MCF 10A (cell line): ENCODE measurements at regions of chr2 and their contacts with region 1.

Region 1: DNA sequence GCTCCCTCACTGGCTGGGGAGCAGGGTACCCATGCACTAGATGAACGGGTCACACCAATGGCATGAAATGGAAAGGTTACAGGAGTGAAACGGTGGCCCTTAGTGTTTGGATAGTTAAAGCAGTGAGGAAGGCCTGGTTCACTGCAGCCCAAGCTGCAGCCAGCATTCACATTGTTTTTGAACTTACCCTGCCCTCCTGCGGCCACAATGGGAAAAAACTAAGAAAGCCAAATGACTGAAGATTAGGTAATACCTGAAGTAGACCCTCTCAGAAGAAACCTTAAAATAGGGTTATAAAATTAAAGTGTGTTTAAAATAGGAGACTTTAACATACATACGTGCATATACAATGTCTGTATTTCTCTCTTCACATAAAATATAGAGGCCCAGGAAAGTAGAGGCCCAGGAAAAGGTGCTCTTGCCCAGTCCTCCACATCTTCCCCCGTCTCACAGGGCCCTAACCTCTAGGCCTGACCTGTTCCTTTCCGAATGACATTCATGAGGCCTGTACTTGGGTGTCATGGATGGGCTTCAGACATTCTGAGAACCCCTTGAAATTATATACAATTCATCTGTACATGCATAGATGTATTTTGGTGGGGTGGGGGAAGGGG is 33.3 kb downstream of the DOK1 start:
- DNase-seq: peak; percentile 78
- H3K4me3 Mint-ChIP-seq: no peak overlapping the region
- H3K27ac Mint-ChIP-seq: no peak overlapping the region
- H3K4me1 Mint-ChIP-seq: peaks cover 8% of the 10 kb centered on the region
- H3K27me3 Mint-ChIP-seq: peaks cover 4% of the 10 kb centered on the region
- CTCF ChIP-seq: peak; percentile 71

Region 2: DNA sequence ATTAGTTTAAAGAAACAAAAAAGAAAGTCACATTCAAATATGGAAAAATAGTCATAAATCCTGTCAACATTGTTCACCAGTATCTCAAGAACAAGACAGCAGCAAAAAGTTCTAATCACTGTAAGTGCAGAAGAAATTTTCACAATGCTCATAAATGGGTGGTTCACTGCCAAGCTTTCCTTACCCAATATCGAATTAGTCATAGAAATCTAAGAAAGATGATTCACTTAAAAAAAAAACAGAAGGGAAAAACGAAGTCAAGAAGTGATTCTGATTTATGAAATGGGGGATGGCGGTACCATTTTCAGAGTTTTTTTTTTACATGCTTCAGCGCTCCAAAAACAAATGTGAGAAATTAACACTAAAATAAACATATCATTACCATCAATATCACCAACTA is 1918.7 kb before region 1 on chr2:
- CTCF ChIA-PET with region 1: no interaction called
- POLR2A ChIA-PET with region 1: no interaction called
- intact Hi-C with region 1: no loop called
- DNase-seq: peak; percentile 82
- H3K4me3 Mint-ChIP-seq: peak overlapping the region; percentile 3
- H3K27ac Mint-ChIP-seq: no peak overlapping the region
- H3K4me1 Mint-ChIP-seq: peaks cover 13% of the 10 kb centered on the region
- H3K27me3 Mint-ChIP-seq: no peaks in the 10 kb centered on the region
- CTCF ChIP-seq: no peak

Region 3: GRCh38 chr2:74250189-74250631 is 337.6 kb before region 1 on chr2:
- CTCF ChIA-PET with region 1: interaction called, 4 read pairs
- POLR2A ChIA-PET with region 1: no interaction called
- intact Hi-C with region 1: loop called (anchors 5 kb)
- DNase-seq: peak; percentile 49
- H3K4me3 Mint-ChIP-seq: no peak overlapping the region
- H3K27ac Mint-ChIP-seq: no peak overlapping the region
- H3K4me1 Mint-ChIP-seq: peaks cover 5% of the 10 kb centered on the region
- H3K27me3 Mint-ChIP-seq: peaks cover 11% of the 10 kb centered on the region
- CTCF ChIP-seq: peak; percentile 70

Region 4: DNA sequence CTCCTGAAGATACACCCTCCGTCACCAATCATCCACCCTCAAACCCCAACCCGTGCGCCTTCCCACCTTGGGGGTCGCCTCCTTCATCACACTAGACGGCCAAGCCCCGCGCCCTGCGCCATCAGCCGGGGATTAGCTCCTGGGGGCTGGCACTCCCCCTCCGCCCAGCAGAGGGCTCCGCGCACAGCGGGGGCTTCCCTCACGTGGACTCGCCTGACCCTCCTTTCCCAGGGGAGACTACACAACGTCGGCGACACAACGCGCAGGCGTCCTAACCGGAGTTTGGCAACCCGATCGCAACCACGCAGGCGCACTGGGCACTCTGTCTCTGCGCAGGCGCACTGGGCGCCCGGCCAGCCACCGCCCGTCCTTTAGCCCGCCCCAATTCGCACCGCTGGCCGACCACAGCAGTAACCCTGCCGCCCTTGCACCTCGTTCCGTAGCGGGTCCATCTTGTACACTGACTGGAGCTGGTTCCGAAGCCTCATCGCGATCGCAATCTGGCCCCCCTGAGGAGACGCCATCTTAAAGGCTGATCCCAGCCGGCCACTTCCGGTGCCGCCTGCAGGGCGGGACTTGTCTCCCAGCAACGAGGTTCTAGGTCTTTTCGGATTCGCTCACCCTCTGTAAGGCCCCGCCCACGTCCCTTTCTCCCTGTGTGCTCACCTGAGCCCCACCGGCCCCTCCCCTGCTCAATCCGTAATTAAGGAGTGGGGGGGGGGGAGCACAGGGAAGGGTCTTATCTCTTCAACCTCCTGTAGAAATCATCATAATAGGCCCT is 80.4 kb before region 1 on chr2 and contains the start of gene PCGF1:
- CTCF ChIA-PET with region 1: interaction called, 22 read pairs
- POLR2A ChIA-PET with region 1: interaction called, 4 read pairs
- intact Hi-C with region 1: loop called (anchors 1 kb)
- DNase-seq: peak; percentile 98
- H3K4me3 Mint-ChIP-seq: peak within 1 kb of the TSS; percentile 88
- H3K27ac Mint-ChIP-seq: peak within 1 kb of the TSS; percentile 98
- H3K4me1 Mint-ChIP-seq: peaks cover 28% of the 10 kb centered on the region
- H3K27me3 Mint-ChIP-seq: no peaks in the 10 kb centered on the region
- CTCF ChIP-seq: no peak
- total RNA-seq, gene PCGF1: 37.5 and 41.6 TPM in 2 replicates

Region 5: DNA sequence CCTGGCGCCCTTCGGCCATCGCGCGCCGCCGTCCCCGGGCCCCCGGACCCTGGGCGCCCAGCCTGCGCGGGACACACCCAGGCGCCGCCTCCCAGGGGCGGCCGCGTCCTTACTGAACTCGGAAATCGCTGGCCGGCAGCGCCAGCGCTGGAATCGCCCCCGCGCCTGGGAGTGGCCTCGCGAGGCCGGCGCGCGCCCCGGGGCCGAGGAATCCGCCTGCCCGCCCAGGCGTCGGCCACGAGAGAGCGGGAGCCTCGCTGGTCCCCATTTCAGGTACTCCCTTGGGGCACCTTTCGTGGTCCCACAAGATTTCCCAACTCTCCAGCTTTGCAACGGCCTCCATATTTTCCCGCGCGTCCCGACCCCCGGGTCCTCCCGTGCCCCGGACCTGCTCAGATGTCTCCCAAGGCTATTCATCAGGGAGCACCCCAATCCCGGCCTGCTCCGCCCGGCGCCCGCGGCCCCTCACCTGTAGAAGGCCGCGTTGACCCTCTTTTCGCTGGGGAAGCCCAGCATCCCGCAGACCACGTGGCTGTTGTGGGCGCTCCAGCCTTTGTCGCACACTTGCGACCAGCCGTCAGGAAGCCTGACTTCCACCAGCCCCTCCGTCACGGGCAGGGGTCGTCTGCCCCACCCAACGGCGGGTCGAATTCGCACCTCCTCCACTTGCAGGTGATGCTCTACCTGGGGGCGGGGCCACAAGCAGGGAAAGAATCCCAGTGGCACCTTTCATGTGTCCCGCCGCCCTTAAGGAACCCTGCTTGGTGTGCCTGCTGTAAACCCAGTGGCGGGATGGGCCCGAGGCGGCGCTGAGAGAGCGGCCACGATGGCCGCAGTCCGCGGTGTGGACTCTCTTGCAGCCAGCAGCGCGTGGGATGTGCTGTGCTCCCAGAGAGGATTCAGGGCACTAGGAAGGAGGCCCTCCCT is 38.6 kb before region 1 on chr2:
- CTCF ChIA-PET with region 1: interaction called, 23 read pairs
- POLR2A ChIA-PET with region 1: no interaction called
- intact Hi-C with region 1: loop called (anchors 5 kb)
- DNase-seq: peak; percentile 71
- H3K4me3 Mint-ChIP-seq: peak overlapping the region; percentile 77
- H3K27ac Mint-ChIP-seq: no peak overlapping the region
- H3K4me1 Mint-ChIP-seq: peaks cover 11% of the 10 kb centered on the region
- H3K27me3 Mint-ChIP-seq: no peaks in the 10 kb centered on the region
- CTCF ChIP-seq: no peak

Region 6: DNA sequence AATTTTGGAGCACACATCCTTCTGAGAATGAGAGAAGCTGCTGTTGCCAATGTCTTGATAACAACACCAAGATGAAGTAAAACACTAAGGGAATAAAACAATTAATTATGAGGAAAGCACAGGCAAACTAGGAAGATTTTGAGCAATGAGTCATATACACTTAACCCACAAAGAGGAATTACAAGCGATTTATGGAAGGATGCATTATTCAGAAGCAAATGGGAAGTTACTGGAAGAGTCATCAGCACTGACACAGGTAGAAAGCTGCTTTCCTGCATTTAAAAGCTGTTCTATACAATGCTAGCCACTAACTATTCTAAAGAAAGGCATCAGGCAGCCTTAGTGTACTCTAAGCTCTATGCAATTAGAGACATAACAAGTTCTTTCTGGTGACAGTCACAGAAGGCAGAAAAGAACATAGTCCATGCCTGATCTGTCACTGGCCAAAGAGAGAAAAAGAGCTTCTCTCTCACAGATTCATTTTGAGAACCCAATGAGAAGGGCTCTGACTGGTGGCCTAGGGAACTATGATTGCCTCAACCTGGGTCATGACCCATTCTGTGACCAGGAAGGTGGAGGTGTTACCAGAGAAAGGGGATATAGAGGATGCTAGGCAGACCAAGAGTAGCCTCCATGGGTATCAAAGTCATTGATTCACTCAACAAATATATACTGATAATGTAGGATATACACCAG is 15.0 kb after region 1 on chr2:
- CTCF ChIA-PET with region 1: interaction called, 61 read pairs
- POLR2A ChIA-PET with region 1: interaction called, 4 read pairs
- intact Hi-C with region 1: no loop called
- DNase-seq: peak; percentile 43
- H3K4me3 Mint-ChIP-seq: no peak overlapping the region
- H3K27ac Mint-ChIP-seq: no peak overlapping the region
- H3K4me1 Mint-ChIP-seq: peaks cover 7% of the 10 kb centered on the region
- H3K27me3 Mint-ChIP-seq: peaks cover 46% of the 10 kb centered on the region
- CTCF ChIP-seq: no peak